AG04449 (cell line): ENCODE measurements at regions of chr4 and their contacts with region 1.

Region 1: DNA sequence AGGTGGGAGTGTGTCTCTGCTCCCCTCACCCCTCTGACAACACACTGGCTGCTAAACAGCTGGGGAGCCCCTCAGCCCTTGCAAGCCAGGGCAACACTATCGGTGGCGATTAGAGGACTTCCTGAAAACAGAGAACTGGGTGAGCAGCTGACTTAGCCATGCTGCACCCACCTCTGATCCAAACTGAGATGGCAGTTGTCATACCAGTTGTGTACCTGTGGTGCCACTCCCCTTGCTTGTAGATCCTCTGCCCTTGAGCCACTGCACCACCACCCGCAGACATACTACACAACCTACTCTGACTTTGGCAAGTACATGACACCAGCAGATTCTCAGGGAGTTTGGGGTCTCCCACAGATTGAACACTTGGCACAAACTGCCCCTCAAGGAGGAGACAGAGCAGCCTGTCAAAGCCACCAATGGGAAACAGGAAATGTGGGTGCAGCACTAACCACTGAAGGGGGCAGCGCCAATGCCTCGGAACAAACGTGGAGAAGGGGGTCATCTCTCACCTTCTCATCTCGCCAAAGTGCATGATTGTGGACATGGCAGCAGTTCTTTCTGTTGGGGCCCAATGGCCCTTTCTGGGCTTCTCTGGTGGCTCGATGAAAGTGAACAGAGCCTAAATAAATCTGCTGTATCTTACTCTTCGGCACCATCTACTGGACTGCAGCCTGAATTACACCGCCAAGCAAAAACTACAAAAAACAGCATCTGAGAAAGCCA is 119.8 kb downstream of the NEK1 start:
- DNase-seq: no peak
- H3K4me3 ChIP-seq: no peak overlapping the region
- CTCF ChIP-seq: peak; percentile 67

Region 2: GRCh38 chr4:168995537-168996295 is 496.9 kb before region 1 on chr4:
- CTCF ChIA-PET with region 1: interaction called, 23 read pairs
- POLR2A ChIA-PET with region 1: no interaction called
- DNase-seq: no peak
- H3K4me3 ChIP-seq: no peak overlapping the region
- CTCF ChIP-seq: peak; percentile 20

Region 3: GRCh38 chr4:169010125-169011023 is 482.2 kb before region 1 on chr4 and contains the start of gene CBR4:
- CTCF ChIA-PET with region 1: interaction called, 10 read pairs
- POLR2A ChIA-PET with region 1: no interaction called
- DNase-seq: peak; percentile 94
- H3K4me3 ChIP-seq: peak within 1 kb of the TSS; percentile 77
- CTCF ChIP-seq: peak; percentile 6

Region 4: GRCh38 chr4:169024762-169025161 is 467.8 kb before region 1 on chr4:
- CTCF ChIA-PET with region 1: interaction called, 26 read pairs
- POLR2A ChIA-PET with region 1: no interaction called
- DNase-seq: no peak
- H3K4me3 ChIP-seq: no peak overlapping the region
- CTCF ChIP-seq: peak; percentile 59

Region 5: DNA sequence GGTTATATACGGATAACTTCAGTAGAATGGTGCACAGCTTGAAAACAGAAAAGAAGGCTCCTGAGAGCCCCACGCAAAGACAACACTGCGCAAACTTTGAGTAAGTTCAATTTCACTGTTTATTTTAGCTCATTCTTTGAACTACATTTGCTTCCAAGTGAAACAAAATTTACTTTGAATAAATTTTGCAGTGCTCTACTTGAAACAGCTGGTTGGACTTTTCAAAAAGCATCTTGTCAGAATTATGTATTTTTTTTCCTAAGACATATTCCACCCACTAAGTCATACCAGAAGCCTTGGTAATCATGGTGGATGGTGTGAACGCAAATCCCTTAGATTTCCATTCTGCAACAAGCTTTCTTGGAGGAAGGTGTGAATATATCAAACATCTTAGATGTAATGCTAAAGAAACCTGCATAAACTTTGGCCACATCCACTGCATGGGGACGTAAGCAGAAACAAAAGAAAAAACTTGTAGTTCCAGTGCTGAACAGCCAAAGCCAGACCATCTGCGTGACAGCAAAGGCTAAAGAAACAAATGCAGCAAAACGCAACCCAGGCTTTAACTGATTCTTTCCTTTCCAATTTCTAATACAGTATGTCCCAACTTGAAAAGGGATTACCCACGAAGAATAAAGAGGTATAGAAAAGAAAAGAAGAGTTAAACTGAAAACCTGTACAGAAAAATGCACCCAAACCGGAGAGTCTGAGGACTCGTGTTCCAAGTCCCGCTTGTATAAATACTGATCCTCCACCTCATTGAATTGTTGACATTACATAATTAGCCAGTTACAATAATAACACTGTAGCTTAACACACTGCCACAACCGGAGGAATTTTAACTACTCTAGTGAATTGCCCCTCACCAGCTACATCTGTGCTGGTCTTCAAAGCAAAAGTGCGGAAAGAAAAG is 312.7 kb before region 1 on chr4:
- CTCF ChIA-PET with region 1: no interaction called
- POLR2A ChIA-PET with region 1: no interaction called
- DNase-seq: no peak
- H3K4me3 ChIP-seq: no peak overlapping the region
- CTCF ChIP-seq: no peak

Region 6: GRCh38 chr4:169410839-169411770 is 81.5 kb before region 1 on chr4:
- CTCF ChIA-PET with region 1: no interaction called
- POLR2A ChIA-PET with region 1: no interaction called
- DNase-seq: peak; percentile 77
- H3K4me3 ChIP-seq: no peak overlapping the region
- CTCF ChIP-seq: no peak

Region 7: DNA sequence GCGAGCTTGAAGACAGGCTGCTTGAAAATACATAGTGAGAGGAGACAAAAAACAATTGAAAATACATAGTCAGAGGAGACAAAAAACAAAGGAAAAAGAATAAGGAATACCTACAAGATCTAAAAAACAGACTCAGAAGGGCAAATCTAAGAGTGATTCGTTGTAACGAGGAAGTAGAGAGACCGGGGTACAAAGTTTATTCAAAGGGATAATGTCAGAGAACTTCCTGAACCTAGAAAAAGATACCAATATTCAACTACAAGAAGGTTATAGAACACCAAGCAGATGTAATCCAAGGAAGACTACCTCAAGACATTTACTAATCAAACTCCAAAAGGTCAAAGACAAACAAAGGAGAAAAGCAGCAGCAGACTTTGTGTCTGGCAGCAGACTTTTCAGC is 45.8 kb before region 1 on chr4:
- CTCF ChIA-PET with region 1: no interaction called
- POLR2A ChIA-PET with region 1: no interaction called
- DNase-seq: no peak
- H3K4me3 ChIP-seq: no peak overlapping the region
- CTCF ChIP-seq: no peak

Region 8: DNA sequence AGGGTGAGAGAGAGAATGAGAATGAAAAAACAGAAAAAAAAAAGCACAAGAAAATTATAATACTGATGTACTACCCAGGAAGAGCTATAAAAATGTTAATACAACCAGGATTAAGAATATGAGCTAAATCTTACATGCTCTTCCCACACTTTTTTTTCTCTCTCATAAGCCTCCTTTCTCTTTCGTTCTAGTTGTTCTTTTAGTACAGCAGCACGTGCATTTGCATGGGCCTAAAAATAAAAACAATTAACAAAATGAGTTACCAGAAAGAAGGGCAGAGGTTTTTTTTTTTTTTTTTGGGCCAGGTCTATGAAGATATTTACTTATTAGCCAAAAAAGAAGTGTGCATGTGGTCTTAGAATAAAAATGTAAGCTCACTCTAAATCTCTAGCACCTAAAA is 14.3 kb after region 1 on chr4:
- CTCF ChIA-PET with region 1: interaction called, 13 read pairs
- POLR2A ChIA-PET with region 1: no interaction called
- DNase-seq: no peak
- H3K4me3 ChIP-seq: no peak overlapping the region
- CTCF ChIP-seq: no peak

Region 9: GRCh38 chr4:169566021-169566818 is 73.6 kb after region 1 on chr4:
- CTCF ChIA-PET with region 1: interaction called, 13 read pairs
- POLR2A ChIA-PET with region 1: no interaction called
- DNase-seq: no peak
- H3K4me3 ChIP-seq: no peak overlapping the region
- CTCF ChIP-seq: peak; percentile 33